Heart left ventricle (tissue), 16 donors: ENCODE measurements at regions of chr2 and their contacts with region 1.

Region 1: DNA sequence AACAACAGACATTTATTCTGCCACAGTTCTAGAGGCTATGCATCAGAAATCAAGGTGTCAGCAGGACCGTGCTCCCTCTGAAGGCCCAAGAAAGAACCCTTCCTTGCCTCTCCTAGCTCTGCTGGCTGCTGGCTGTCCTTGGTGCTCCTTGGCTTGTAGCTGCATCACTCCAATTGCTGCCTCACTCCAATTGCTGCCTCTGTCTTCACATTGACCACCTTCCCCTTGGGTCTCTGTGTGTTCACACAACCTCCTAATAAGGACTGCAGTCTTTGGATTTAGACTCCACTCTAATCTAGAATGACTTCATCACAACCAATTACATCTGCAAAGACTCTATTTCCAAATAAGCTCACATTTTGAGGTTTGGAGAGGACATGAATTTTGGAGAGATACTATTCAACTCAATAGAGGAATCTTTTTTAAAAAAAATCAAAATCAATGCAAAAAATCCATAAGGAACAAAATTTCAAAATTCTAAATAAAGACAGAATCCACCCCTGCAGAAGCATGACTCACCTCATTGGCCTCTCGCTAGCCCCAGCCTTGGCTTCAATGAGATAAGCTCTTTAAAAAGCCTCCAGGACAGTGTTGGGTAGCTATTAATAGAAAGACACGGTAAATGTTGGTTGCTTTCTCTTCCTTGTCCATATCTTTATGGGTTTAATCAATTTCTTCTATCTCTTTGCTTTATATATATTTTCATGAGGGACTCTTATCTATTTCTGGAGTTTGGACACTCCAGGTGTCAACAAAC is 267.6 kb upstream of the MGAT5 start:
- DNase-seq: peak in 4 of 5 donors; percentile 32 to 42 (median 36)
- ATAC-seq: peak; percentile 84 to 93 (median 91)
- H3K4me3 ChIP-seq: peak overlapping the region in 6 of 12 donors; percentile 4 to 27 (median 22)
- H3K27ac ChIP-seq: peak overlapping the region; percentile 51 to 94 (median 66)
- H3K4me1 ChIP-seq: peaks cover 0 to 21% (median 7%) of the 10 kb centered on the region in 12 donors
- H3K27me3 ChIP-seq: no peaks in the 10 kb centered on the region
- CTCF ChIP-seq: no peak
- POLR2A ChIP-seq: no peak

Region 2: DNA sequence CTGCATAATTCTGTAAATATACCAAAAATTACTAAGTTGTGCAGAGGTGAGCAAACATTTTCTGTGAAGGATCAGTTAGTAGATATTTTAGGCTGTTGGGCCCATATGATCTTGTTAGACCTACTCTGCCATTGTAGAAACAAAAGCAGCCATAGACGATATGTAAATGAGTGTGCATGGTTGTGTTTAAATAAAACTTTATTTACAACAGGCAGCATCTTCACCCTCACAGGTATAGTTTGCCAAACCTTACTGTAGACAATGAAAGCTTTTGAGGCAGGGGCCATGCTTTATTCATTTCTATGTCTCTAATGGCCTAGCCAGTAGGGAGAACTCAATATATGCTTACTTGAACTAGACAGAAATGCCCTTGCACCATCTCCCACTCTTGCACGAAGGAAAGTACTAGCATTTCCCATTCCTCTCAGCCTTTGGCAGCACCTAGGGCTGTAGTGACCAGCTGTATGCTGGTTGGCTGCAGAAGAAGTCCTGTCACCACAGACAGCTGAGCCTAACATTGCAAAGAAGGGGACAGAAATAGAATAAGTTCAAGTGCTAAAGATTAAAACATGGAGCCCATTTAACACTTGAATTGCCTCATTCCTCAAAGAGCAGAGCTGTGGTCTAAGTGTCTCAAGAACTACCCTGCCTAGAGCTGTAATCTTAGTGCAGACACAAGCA is 37.5 kb before region 1 on chr2:
- intact Hi-C with region 1: loop called in 1 of 10 experiments (anchors 5 kb)
- DNase-seq: peak in 4 of 5 donors; percentile 62 to 75 (median 68)
- ATAC-seq: peak; percentile 97 to 98 (median 98)
- H3K4me3 ChIP-seq: no peak overlapping the region
- H3K27ac ChIP-seq: peak overlapping the region in 9 of 12 donors; percentile 36 to 70 (median 46)
- H3K4me1 ChIP-seq: peaks cover 0 to 42% (median 5%) of the 10 kb centered on the region in 12 donors
- H3K27me3 ChIP-seq: no peaks in the 10 kb centered on the region
- CTCF ChIP-seq: no peak
- POLR2A ChIP-seq: no peak

Region 3: DNA sequence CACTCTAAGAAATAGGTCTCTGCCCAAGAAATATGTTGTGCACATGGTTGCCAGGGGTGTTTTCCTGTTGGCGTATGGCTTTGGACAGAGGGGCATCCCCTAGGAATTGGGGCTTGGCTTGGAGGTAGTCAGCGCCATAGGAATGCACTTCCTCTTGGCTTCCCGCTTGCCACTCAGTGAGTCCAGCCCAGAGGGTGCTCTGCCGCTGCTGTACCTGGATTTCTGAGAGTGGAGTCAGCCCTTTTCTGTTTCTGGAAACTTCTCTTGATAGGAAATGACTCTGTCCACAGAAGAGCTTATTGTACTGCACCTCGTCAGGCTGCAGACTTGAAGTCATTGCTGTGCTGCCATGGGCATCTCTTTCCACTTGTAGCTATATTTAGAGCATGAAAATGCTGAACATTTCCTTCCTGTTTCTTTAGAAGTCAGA is 150.9 kb after region 1 on chr2:
- intact Hi-C with region 1: no loop called
- DNase-seq: peak in 4 of 5 donors; percentile 48 to 77 (median 55)
- ATAC-seq: peak; percentile 60 to 78 (median 71)
- H3K4me3 ChIP-seq: peak overlapping the region in 10 of 12 donors; percentile 1 to 45 (median 32)
- H3K27ac ChIP-seq: peak overlapping the region; percentile 30 to 89 (median 82)
- H3K4me1 ChIP-seq: peaks cover 16 to 99% (median 87%) of the 10 kb centered on the region in 12 donors
- H3K27me3 ChIP-seq: no peaks in the 10 kb centered on the region
- CTCF ChIP-seq: peak in 1 of 12 donors; percentile 6
- POLR2A ChIP-seq: no peak